ENCODE measurements at regions of chr11 and their contacts with region 1.

Region 1: DNA sequence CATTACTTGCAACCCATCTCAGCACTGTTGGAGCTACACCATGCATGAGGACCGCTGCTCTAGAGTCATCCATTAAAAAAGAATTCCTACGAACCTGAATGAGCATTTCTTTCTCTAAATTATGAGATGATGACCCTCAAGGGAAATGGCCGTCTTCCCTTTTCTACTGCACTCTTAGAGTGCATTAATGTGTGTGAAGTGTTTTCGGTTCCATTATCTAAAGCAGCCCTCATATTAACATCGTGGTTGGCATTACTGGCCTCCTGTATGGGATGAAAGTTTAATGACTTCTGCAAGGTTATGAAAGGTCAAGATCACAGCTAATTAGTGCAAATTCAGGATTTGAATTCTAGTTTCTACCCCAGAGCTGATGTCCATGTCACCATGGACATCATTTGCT is 16.7 kb downstream of the CD44 start:
- DNase-seq: no peak
- ATAC-seq: no peak
- H3K4me3 ChIP-seq: no peak overlapping the region
- H3K27ac ChIP-seq: no peak overlapping the region
- H3K4me1 ChIP-seq: peaks cover 16 to 47% of the 10 kb centered on the region in 2 donors
- H3K27me3 ChIP-seq: no peaks in the 10 kb centered on the region

Region 2: GRCh38 chr11:35232891-35233330 is 77.2 kb after region 1 on chr11:
- intact Hi-C with region 1: loop called in 1 of 2 experiments (anchors 2 kb)
- DNase-seq: no peak
- ATAC-seq: no peak
- H3K4me3 ChIP-seq: no peak overlapping the region
- H3K27ac ChIP-seq: peak overlapping the region in 1 of 2 donors; percentile 67
- H3K4me1 ChIP-seq: no peaks in the 10 kb centered on the region
- H3K27me3 ChIP-seq: no peaks in the 10 kb centered on the region

Region 3: GRCh38 chr11:35305670-35306382 is 150.1 kb after region 1 on chr11:
- intact Hi-C with region 1: no loop called
- DNase-seq: no peak
- ATAC-seq: no peak
- H3K4me3 ChIP-seq: no peak overlapping the region
- H3K27ac ChIP-seq: no peak overlapping the region
- H3K4me1 ChIP-seq: peaks cover 0 to 4% of the 10 kb centered on the region in 2 donors
- H3K27me3 ChIP-seq: no peaks in the 10 kb centered on the region